Activated B cell treated with CpG ODN at 0.5 μM for 24 hours (primary cell): ENCODE measurements at regions of chr15 and their contacts with region 1.

Region 1: GRCh38 chr15:99365242-99365641 is 114.0 kb downstream of the LRRC28 start:
- DNase-seq: no peak
- ATAC-seq: no peak
- H3K4me3 Mint-ChIP-seq: no peak overlapping the region
- H3K27ac Mint-ChIP-seq: no peak overlapping the region
- H3K4me1 Mint-ChIP-seq: peaks cover 7% of the 10 kb centered on the region
- H3K27me3 Mint-ChIP-seq: no peaks in the 10 kb centered on the region
- CTCF ChIP-seq: no peak

Region 2: GRCh38 chr15:98954411-98954810 is 410.8 kb before region 1 on chr15:
- CTCF ChIA-PET with region 1: no interaction called
- POLR2A ChIA-PET with region 1: no interaction called
- intact Hi-C with region 1: no loop called
- DNase-seq: no peak
- ATAC-seq: no peak
- H3K4me3 Mint-ChIP-seq: no peak overlapping the region
- H3K27ac Mint-ChIP-seq: no peak overlapping the region
- H3K4me1 Mint-ChIP-seq: peaks cover 3% of the 10 kb centered on the region
- H3K27me3 Mint-ChIP-seq: no peaks in the 10 kb centered on the region
- CTCF ChIP-seq: no peak

Region 3: DNA sequence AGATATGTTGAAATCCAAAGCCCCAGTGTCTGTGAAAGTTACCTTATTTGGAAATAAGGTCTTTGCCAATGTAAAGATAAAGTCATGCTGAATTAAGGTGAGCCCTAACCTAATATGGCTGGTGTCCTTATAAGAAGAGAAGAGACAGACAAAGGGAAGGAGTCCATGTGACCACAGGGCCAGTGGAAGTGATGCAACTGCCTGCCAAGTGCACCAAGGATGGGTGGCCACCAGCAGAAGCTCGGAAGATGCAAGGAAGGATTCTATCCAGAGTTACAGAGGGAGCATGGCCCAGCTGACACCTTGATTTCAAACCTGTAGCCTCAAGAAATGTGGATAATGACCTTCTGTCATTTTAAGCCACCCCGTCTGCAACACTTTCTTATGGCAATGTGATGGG is 322.4 kb before region 1 on chr15:
- CTCF ChIA-PET with region 1: no interaction called
- POLR2A ChIA-PET with region 1: no interaction called
- intact Hi-C with region 1: no loop called
- DNase-seq: no peak
- ATAC-seq: no peak
- H3K4me3 Mint-ChIP-seq: no peak overlapping the region
- H3K27ac Mint-ChIP-seq: no peak overlapping the region
- H3K4me1 Mint-ChIP-seq: no peaks in the 10 kb centered on the region
- H3K27me3 Mint-ChIP-seq: peaks cover 14% of the 10 kb centered on the region
- CTCF ChIP-seq: no peak

Region 4: GRCh38 chr15:99333413-99333812 is 31.8 kb before region 1 on chr15:
- CTCF ChIA-PET with region 1: no interaction called
- POLR2A ChIA-PET with region 1: no interaction called
- intact Hi-C with region 1: loop called (anchors 5 kb)
- DNase-seq: no peak
- ATAC-seq: no peak
- H3K4me3 Mint-ChIP-seq: no peak overlapping the region
- H3K27ac Mint-ChIP-seq: no peak overlapping the region
- H3K4me1 Mint-ChIP-seq: peaks cover 2% of the 10 kb centered on the region
- H3K27me3 Mint-ChIP-seq: no peaks in the 10 kb centered on the region
- CTCF ChIP-seq: no peak